ENCODE measurements at regions of chr6 and their contacts with region 1.

Region 1: GRCh38 chr6:88698661-88699060 is 264.8 kb downstream of the RNGTT start:
- DNase-seq: no peak
- ATAC-seq: no peak

Region 2: DNA sequence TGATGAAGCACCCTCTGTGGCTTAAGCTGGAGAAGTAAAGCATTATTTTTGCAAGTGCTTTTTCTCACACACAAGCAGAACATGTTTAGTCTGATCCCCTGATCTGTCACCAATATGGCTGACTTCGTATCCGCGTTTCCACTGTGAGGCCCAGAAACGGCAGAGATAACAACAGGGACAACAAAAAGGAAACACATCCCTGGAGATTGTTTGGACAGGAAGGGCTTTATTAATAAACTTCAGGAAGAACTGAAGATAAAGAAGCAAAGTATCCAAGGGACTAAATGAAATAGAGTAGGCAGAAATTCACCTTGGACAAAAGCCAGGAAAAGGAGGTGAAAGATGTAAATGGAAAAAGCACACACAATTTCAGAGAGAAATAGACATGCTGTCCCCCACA is 1158.1 kb before region 1 on chr6:
- intact Hi-C with region 1: loop called (anchors 10 kb)
- DNase-seq: no peak
- ATAC-seq: no peak

Region 3: DNA sequence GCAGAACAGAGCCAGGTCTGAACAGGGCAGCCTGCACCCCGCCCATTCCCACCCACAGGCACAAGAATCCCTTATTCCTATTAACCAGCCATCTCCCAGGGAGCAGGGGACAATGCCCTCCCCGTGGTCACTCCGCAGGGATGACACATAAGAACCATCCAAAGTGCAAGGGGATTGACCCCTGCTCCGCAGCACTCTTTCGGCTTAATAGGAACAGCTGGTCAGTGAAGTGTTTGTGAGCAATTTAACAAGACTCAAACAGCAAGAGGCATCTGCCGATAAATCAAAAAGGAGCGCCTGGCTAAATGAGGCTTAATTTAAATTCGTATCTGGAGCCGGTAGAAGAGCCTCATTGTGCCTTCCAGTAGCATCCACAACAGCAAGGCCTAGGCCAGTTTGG is 124.6 kb before region 1 on chr6:
- intact Hi-C with region 1: no loop called
- DNase-seq: no peak
- ATAC-seq: no peak

Region 4: GRCh38 chr6:88933521-88933920 is 234.9 kb after region 1 on chr6:
- intact Hi-C with region 1: no loop called
- DNase-seq: no peak
- ATAC-seq: no peak

Measured in sciatic nerve (tissue), 2 donors.